Esophagus squamous epithelium (tissue), 5 donors: ENCODE measurements at regions of chr13 and their contacts with region 1.

Region 1: GRCh38 chr13:47598340-47598911 is 402.6 kb downstream of the SUCLA2 start:
- DNase-seq: no peak
- H3K4me3 ChIP-seq: no peak overlapping the region
- H3K27ac ChIP-seq: no peak overlapping the region
- H3K4me1 ChIP-seq: no peaks in the 10 kb centered on the region
- H3K27me3 ChIP-seq: no peaks in the 10 kb centered on the region
- CTCF ChIP-seq: peak in 4 of 6 experiments; percentile 26 to 49 (median 35)
- POLR2A ChIP-seq: no peak

Region 2: GRCh38 chr13:46983881-46984280 is 614.5 kb before region 1 on chr13:
- intact Hi-C with region 1: loop called (anchors 10 kb)
- DNase-seq: no peak
- H3K4me3 ChIP-seq: no peak overlapping the region
- H3K27ac ChIP-seq: no peak overlapping the region
- H3K4me1 ChIP-seq: peaks cover 0 to 36% (median 3%) of the 10 kb centered on the region in 3 donors
- H3K27me3 ChIP-seq: no peaks in the 10 kb centered on the region
- CTCF ChIP-seq: peak in 1 of 6 experiments; percentile 17
- POLR2A ChIP-seq: no peak